ENCODE measurements at regions of chr12 and their contacts with region 1.

Region 1: GRCh38 chr12:120580787-120581723 is at the start of gene POP5:
- DNase-seq: peak; percentile 96 to 97
- H3K4me3 ChIP-seq: peak within 1 kb of the TSS; percentile 86
- H3K4me3 Mint-ChIP-seq: peak within 1 kb of the TSS; percentile 99
- H3K27ac Mint-ChIP-seq: peak within 1 kb of the TSS; percentile 96
- H3K4me1 ChIP-seq: no peaks in the 10 kb centered on the region
- H3K4me1 Mint-ChIP-seq: peaks cover 15% of the 10 kb centered on the region
- H3K27me3 ChIP-seq: no peaks in the 10 kb centered on the region
- H3K27me3 Mint-ChIP-seq: no peaks in the 10 kb centered on the region
- CTCF ChIP-seq: no peak
- total RNA-seq, gene POP5: 49.5 and 53.9 TPM in 2 replicates

Region 2: DNA sequence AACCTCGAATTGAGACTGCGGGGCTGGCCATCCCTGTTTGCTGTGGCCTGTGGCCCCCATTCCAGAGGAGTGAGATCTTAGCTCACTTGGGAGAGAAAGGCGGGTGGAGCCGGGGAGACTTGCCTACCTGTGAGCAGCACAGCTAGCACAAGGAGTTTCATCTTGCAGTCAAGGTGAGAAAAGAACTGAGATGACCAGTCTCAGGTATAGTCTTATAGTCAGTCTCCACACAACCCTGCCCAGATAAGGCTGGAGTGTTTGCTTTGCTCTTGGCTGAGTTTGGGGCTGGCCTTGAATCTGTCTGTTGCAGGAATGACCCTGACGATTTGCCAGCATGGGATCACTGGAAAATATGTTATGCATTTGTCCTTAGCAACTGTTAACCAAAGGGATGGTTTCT is 253.5 kb before region 1 on chr12 and contains the start of gene PLA2G1B:
- CTCF ChIA-PET with region 1: interaction called, 3 read pairs
- POLR2A ChIA-PET with region 1: interaction called, 5 read pairs
- intact Hi-C with region 1: loop called (anchors 5 kb)
- DNase-seq: no peak
- H3K4me3 ChIP-seq: no peak within 1 kb of the TSS
- H3K4me3 Mint-ChIP-seq: no peak within 1 kb of the TSS
- H3K27ac Mint-ChIP-seq: no peak within 1 kb of the TSS
- H3K4me1 ChIP-seq: no peaks in the 10 kb centered on the region
- H3K4me1 Mint-ChIP-seq: peaks cover 7% of the 10 kb centered on the region
- H3K27me3 ChIP-seq: no peaks in the 10 kb centered on the region
- H3K27me3 Mint-ChIP-seq: no peaks in the 10 kb centered on the region
- CTCF ChIP-seq: no peak
- total RNA-seq, gene PLA2G1B: not detected in 2 replicates

Region 3: DNA sequence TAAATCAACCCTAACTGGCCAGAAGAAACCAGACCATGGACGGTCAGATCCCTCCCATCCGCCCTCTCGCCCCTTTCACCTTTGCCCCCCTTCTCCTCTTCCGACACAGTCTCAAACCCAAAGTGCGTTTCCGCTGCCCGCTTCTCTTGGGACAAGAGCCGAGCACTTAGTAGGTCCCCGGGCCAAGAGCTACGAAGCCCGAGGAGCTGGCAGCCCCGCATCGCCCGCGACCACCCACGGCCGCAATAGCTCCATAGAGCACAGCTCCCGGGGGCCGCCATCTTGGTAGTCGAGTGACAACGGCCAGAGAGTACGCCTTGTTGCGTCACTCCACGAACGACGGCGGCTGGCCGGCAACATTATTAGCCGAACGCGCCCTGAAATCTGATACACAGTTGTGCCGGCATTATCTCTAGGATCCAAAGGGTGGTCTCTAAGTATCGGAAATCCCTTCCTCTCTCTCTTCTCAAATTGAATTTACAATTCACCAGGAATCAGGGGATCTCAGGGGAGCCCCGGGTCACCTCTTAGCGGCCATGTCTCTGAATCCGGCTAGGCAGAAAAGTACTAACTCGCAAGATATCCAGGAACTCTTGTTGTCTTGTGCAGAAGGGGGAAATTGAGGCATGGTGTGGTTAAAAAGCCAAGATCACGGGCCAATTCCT is 52.1 kb before region 1 on chr12 and contains the start of gene COQ5:
- CTCF ChIA-PET with region 1: interaction called, 10 read pairs
- POLR2A ChIA-PET with region 1: interaction called, 12 read pairs
- intact Hi-C with region 1: loop called (anchors 2 kb)
- DNase-seq: peak; percentile 84 to 87
- H3K4me3 ChIP-seq: peak within 1 kb of the TSS; percentile 89
- H3K4me3 Mint-ChIP-seq: peak within 1 kb of the TSS; percentile 81
- H3K27ac Mint-ChIP-seq: peak within 1 kb of the TSS; percentile 93
- H3K4me1 ChIP-seq: peaks cover 5% of the 10 kb centered on the region; the same call in 1 of the 2 replicates
- H3K4me1 Mint-ChIP-seq: peaks cover 6% of the 10 kb centered on the region
- H3K27me3 ChIP-seq: no peaks in the 10 kb centered on the region
- H3K27me3 Mint-ChIP-seq: no peaks in the 10 kb centered on the region
- CTCF ChIP-seq: no peak
- total RNA-seq, gene COQ5: 20.7 and 20.9 TPM in 2 replicates

Region 4: GRCh38 chr12:120686690-120687577 is 105.9 kb after region 1 on chr12 and contains the start of gene MLEC:
- CTCF ChIA-PET with region 1: interaction called, 3 read pairs
- POLR2A ChIA-PET with region 1: no interaction called
- intact Hi-C with region 1: loop called (anchors 2 kb)
- DNase-seq: peak; percentile 98 to 99
- H3K4me3 ChIP-seq: peak within 1 kb of the TSS; percentile 90
- H3K4me3 Mint-ChIP-seq: peak within 1 kb of the TSS; percentile 79
- H3K27ac Mint-ChIP-seq: peak within 1 kb of the TSS; percentile 85
- H3K4me1 ChIP-seq: peaks cover 31% of the 10 kb centered on the region
- H3K4me1 Mint-ChIP-seq: peaks cover 17% of the 10 kb centered on the region
- H3K27me3 ChIP-seq: no peaks in the 10 kb centered on the region
- H3K27me3 Mint-ChIP-seq: no peaks in the 10 kb centered on the region
- CTCF ChIP-seq: peak in 1 of 2 experiments; percentile 11
- total RNA-seq, gene MLEC: 143 and 150 TPM in 2 replicates

Region 5: GRCh38 chr12:120939523-120939922 is 358.5 kb after region 1 on chr12:
- CTCF ChIA-PET with region 1: interaction called, 3 read pairs
- POLR2A ChIA-PET with region 1: interaction called, 14 read pairs
- intact Hi-C with region 1: no loop called
- DNase-seq: no peak
- H3K4me3 ChIP-seq: no peak overlapping the region
- H3K4me3 Mint-ChIP-seq: no peak overlapping the region
- H3K27ac Mint-ChIP-seq: no peak overlapping the region
- H3K4me1 ChIP-seq: peaks cover 35% of the 10 kb centered on the region
- H3K4me1 Mint-ChIP-seq: peaks cover 16% of the 10 kb centered on the region
- H3K27me3 ChIP-seq: no peaks in the 10 kb centered on the region
- H3K27me3 Mint-ChIP-seq: no peaks in the 10 kb centered on the region
- CTCF ChIP-seq: no peak

Region 6: DNA sequence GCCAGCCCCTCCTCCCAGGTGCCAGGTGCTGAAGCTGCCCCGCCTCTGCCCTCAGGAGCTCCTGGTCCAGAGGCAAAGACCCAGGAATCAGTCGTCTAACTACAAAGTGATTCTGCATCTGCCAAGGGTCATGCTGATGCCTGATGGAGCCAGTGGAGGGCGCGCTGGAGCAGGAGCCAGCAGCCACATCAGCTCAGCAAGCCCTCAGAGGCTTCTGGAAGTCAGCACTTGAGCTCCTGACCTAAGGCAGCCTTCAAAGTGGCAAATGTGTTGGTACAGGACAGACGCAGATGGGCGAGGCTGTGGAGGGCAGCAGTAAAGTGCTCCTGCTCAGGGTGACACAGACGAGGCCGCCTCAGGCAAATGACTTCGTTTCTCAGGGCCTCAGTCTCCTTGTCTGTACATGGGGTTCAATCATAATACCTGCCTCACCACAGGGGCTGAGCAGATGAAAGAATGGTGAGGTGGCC is 424.3 kb after region 1 on chr12:
- CTCF ChIA-PET with region 1: no interaction called
- POLR2A ChIA-PET with region 1: no interaction called
- intact Hi-C with region 1: loop called (anchors 2 kb)
- DNase-seq: peak; percentile 66 to 69
- H3K4me3 ChIP-seq: no peak overlapping the region
- H3K4me3 Mint-ChIP-seq: no peak overlapping the region
- H3K27ac Mint-ChIP-seq: peak overlapping the region; percentile 37
- H3K4me1 ChIP-seq: no peaks in the 10 kb centered on the region
- H3K4me1 Mint-ChIP-seq: no peaks in the 10 kb centered on the region
- H3K27me3 ChIP-seq: no peaks in the 10 kb centered on the region
- H3K27me3 Mint-ChIP-seq: no peaks in the 10 kb centered on the region
- CTCF ChIP-seq: peak; percentile 61 to 64